ENCODE measurements at regions of chr4 and their contacts with region 1.

Region 1: GRCh38 chr4:20684852-20685763 is 15.2 kb upstream of the PACRGL start:
- DNase-seq: no peak
- ATAC-seq: peak in 1 of 2 donors; percentile 35
- H3K4me3 ChIP-seq: no peak overlapping the region
- H3K27ac ChIP-seq: no peak overlapping the region
- H3K4me1 ChIP-seq: no peaks in the 10 kb centered on the region
- H3K27me3 ChIP-seq: no peaks in the 10 kb centered on the region
- CTCF ChIP-seq: peak; percentile 56

Region 2: GRCh38 chr4:20422398-20422797 is 262.7 kb before region 1 on chr4:
- intact Hi-C with region 1: loop called (anchors 10 kb)
- DNase-seq: no peak
- ATAC-seq: peak; percentile 63 to 72
- H3K4me3 ChIP-seq: no peak overlapping the region
- H3K27ac ChIP-seq: no peak overlapping the region
- H3K4me1 ChIP-seq: peaks cover 4% of the 10 kb centered on the region
- H3K27me3 ChIP-seq: no peaks in the 10 kb centered on the region
- CTCF ChIP-seq: peak; percentile 47

Measured in lower lobe of right lung (tissue), 2 donors.